Mammary epithelial cell (primary cell): ENCODE measurements at regions of chr5 and their contacts with region 1.

Region 1: GRCh38 chr5:111550279-111551020 is 38.1 kb upstream of the STARD4 start:
- DNase-seq: peak; percentile 98
- H3K4me3 ChIP-seq: no peak overlapping the region
- H3K27ac ChIP-seq: peak overlapping the region; percentile 73
- H3K4me1 ChIP-seq: peaks cover 13% of the 10 kb centered on the region
- H3K27me3 ChIP-seq: no peaks in the 10 kb centered on the region
- CTCF ChIP-seq: peak; percentile 45 to 51

Region 2: GRCh38 chr5:111641533-111642230 is 91.2 kb after region 1 on chr5:
- CTCF ChIA-PET with region 1: no interaction called
- dilution Hi-C with region 1: no loop called
- in situ Hi-C with region 1: no loop called
- intact Hi-C with region 1: no loop called
- DNase-seq: peak; percentile 81
- H3K4me3 ChIP-seq: no peak overlapping the region
- H3K27ac ChIP-seq: peak overlapping the region; percentile 59
- H3K4me1 ChIP-seq: peaks cover 8% of the 10 kb centered on the region
- H3K27me3 ChIP-seq: no peaks in the 10 kb centered on the region
- CTCF ChIP-seq: no peak

Region 3: GRCh38 chr5:111680737-111681413 is 130.4 kb after region 1 on chr5:
- CTCF ChIA-PET with region 1: no interaction called
- dilution Hi-C with region 1: no loop called
- in situ Hi-C with region 1: no loop called
- intact Hi-C with region 1: loop called (anchors 1 kb)
- DNase-seq: peak; percentile 96
- H3K4me3 ChIP-seq: no peak overlapping the region
- H3K27ac ChIP-seq: peak overlapping the region; percentile 67
- H3K4me1 ChIP-seq: peaks cover 28% of the 10 kb centered on the region
- H3K27me3 ChIP-seq: no peaks in the 10 kb centered on the region
- CTCF ChIP-seq: no peak

Region 4: DNA sequence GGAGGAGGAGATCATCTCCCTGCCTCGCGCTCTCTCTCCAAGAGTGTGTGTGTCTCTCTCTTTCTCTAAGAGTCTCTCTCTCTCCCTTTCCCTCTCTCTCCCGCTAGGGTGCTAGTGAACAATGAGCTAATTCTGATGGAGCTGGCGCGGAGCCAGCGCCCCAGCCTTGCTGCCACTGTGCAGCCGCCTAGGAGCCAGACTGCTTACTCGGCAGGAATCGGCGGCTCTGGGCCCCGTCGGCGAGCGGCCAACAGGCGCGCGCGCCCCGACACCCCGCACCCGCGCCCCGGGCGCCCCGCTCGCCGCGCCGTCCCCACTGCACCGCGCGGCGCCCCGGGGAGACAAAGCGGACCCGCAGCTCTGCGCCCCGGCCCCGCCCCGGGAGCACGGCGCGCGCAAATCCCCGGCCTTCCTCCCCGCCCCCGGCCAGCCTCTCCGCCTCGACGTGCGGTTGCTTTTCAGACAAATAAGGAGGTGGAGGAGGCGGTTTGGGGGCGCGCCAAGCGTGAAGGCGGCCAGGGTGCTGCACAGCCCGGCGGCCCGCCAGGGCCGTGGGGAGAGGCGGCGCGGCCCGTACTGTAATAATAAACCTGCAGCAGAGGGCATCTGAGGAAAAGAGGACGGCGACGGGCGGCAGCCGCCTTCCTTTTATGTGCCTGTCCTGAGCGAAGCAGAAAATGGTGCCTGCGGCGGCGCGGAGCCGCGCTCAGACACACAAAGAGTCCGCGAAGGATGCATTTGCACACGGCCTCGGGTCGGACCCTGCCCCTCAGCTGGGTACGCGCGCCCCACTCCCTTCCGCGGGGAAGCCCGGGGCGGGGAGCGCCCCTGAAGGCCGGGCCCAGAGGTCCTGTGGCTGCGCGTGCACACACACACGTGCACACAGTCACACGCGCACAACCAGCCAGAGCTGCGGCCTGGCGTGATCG is 207.2 kb after region 1 on chr5:
- CTCF ChIA-PET with region 1: interaction called, 3 read pairs
- dilution Hi-C with region 1: no loop called
- in situ Hi-C with region 1: loop called in 1 of 2 experiments (anchors 10 kb)
- intact Hi-C with region 1: loop called (anchors 1 kb)
- DNase-seq: peak; percentile 93
- H3K4me3 ChIP-seq: peak overlapping the region; percentile 35 to 58 (median 39)
- H3K27ac ChIP-seq: peak overlapping the region; percentile 28
- H3K4me1 ChIP-seq: peaks cover 5% of the 10 kb centered on the region
- H3K27me3 ChIP-seq: no peaks in the 10 kb centered on the region
- CTCF ChIP-seq: peak; percentile 48 to 70

Region 5: DNA sequence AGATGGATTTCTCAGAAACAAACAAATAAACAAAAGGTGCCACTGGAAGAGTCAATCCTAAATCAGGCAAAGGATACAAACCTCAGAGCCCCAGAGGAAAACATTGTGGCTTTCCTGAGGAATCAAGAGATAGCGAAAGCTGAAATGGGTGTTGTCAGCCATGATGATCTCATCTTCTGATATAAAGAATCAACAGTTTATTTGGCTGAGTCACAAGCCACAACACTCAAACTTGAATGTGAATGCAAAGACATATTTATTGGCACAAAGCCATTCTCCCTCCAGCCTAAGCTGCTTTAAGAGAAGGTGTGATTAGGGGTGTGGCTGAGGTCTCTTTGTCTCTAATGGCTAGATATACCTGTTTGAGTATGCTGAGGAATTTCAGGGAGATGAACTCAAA is 279.9 kb after region 1 on chr5:
- CTCF ChIA-PET with region 1: no interaction called
- dilution Hi-C with region 1: no loop called
- in situ Hi-C with region 1: no loop called
- intact Hi-C with region 1: loop called (anchors 1 kb)
- DNase-seq: peak; percentile 94
- H3K4me3 ChIP-seq: no peak overlapping the region
- H3K27ac ChIP-seq: peak overlapping the region; percentile 18
- H3K4me1 ChIP-seq: peaks cover 7% of the 10 kb centered on the region
- H3K27me3 ChIP-seq: peaks cover 13% of the 10 kb centered on the region
- CTCF ChIP-seq: no peak